ENCODE measurements at regions of chr10 and their contacts with region 1.

Region 1: DNA sequence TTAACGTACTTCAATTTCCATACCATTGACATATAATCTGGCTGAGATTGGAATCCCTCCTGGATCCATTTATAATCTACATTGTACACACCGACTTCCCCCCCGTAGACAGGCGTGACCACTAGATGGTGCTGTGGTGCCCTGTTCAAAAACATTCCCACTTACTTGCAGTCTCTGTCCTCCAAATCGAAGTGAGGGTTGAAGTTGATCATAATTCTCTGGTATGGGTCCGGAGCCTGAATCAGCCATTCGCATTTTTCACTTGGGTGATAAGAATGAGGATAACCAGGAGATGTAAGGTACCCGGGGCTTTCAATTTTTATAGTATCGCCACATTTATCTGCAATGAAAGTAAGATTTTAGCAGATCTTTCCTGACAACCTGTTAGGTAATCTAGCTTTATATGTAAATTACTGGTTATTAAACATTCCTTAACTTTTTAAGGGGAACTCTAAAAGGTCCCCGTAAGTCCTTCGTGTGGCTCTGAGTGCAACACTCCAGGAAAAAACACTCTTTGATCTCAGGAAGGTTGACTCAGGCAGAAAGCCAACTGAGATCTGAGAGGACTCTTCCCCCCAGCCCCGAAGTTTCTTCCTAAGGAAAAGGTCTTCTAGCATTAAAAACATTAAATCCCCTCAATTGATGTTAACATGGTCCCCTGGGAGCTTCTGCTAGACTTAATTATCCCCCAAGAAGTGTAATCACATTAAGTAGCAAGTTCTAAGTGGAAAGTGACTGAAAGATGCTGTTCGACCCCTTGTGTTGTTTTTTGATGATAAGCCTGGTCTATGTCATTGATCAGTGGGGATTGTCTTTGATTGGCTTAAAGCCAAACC is 3.7 kb downstream of the NRP1 start:
- DNase-seq: peak; percentile 82 to 90
- ATAC-seq: peak in 3 of 4 donors; percentile 36 to 53 (median 49)
- H3K4me3 ChIP-seq: peak overlapping the region; percentile 84
- H3K27ac ChIP-seq: peak overlapping the region; percentile 85
- H3K4me1 ChIP-seq: peaks cover 42% of the 10 kb centered on the region
- H3K27me3 ChIP-seq: no peaks in the 10 kb centered on the region
- CTCF ChIP-seq: peak; percentile 91

Region 2: GRCh38 chr10:33193057-33193700 is 137.6 kb before region 1 on chr10:
- intact Hi-C with region 1: loop called (anchors 5 to 10 kb)
- DNase-seq: peak; percentile 73 to 83
- ATAC-seq: peak; percentile 78 to 93 (median 84)
- H3K4me3 ChIP-seq: peak overlapping the region; percentile 8
- H3K27ac ChIP-seq: peak overlapping the region; percentile 50
- H3K4me1 ChIP-seq: peaks cover 6% of the 10 kb centered on the region
- H3K27me3 ChIP-seq: no peaks in the 10 kb centered on the region
- CTCF ChIP-seq: peak; percentile 78

Region 3: DNA sequence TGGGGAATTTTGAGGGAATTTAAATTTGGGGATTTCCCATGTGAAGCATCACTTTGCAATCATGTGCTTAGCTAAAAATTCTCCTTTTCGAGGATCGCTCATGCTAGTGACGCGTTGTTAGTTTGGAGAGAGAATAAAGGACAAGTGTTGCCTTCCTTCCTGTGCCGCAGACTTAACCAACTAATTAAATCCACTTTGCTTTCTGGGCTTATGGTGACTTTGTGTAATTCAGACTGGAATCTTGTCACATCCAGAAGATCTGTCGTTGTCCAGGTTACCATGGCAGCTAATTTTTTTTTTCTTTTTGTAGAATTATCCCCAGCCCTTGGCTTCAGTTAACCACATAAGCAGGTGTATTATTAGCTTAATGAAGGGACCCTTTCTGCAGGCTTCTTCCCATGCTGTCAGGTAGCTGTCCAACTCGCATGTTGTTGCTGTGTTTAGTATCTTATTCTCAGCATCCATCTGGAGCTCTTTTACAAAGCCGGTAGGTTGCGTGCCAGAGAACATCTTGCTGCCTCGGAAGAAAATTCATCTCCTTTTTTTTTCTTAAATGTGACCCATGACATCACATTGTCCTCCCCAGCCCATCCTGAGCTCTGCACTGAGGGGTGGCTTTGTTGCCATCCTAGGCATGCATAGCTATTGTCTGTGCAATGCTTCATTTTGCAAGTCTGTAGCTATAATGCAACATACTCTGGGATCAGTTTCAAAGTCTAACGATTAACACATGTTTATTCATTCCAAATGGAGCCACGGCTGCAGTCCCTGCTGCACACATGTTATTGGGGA is 50.9 kb after region 1 on chr10:
- intact Hi-C with region 1: no loop called
- DNase-seq: no peak
- ATAC-seq: no peak
- H3K4me3 ChIP-seq: no peak overlapping the region
- H3K27ac ChIP-seq: no peak overlapping the region
- H3K4me1 ChIP-seq: peaks cover 3% of the 10 kb centered on the region
- H3K27me3 ChIP-seq: no peaks in the 10 kb centered on the region
- CTCF ChIP-seq: no peak

Region 4: DNA sequence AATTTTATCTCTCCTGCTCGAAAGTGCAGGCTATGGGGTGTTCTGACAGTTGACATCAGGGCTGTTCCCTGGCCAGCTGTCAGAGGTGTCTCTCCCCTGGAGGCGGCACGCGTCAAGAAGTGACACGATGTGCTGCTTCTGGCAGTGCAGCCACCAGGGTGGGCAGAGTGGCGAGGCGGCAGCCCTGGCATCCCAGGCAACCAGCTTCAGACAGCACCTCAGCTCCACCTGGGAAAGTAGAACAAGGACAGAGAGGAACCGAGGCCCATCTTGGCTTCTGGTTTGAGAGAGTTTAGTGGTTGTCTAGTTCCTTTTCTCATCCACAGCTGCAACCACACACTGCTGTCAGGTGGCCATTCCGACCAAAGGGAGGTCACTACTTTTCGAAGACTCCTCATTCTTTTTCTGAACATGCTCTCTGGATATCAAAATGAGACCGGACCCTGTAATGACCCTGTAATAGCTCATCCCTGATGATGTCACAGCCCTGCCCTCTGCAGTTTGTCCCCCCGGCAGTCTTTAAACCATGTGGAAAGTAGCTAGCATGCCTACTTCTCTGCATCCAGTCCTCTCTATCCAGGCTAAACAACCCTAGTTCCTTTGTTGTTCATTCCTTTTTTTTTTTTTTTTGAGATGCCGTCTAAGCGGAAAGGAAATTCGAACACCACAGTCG is 384.7 kb after region 1 on chr10:
- intact Hi-C with region 1: loop called in 1 of 2 experiments (anchors 10 kb)
- DNase-seq: peak in 1 of 2 donors; percentile 52
- ATAC-seq: peak in 2 of 4 donors; percentile 61 to 64
- H3K4me3 ChIP-seq: no peak overlapping the region
- H3K27ac ChIP-seq: no peak overlapping the region
- H3K4me1 ChIP-seq: peaks cover 5% of the 10 kb centered on the region
- H3K27me3 ChIP-seq: no peaks in the 10 kb centered on the region
- CTCF ChIP-seq: no peak

Region 5: DNA sequence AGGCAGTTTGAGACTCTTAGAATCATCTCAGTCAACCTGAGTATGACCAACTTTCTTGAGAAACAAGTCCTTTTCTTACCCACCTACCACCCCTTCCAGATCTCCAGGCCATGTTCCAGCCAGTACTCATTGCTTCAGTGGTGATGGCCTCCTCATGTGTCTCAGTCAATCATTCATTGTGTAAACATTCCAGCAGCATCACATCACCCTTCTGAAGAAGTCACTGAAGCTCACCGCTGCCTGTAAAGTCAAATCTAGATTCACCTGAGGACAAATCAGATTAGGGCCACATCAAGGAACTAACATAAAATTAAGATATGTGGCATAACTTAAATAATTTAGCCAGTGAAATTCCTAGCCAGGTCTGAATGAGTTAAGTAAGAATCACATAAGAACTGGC is 471.0 kb after region 1 on chr10:
- intact Hi-C with region 1: loop called in 1 of 2 experiments (anchors 5 kb)
- DNase-seq: peak in 1 of 2 donors; percentile 57
- ATAC-seq: peak; percentile 91 to 94 (median 94)
- H3K4me3 ChIP-seq: no peak overlapping the region
- H3K27ac ChIP-seq: peak overlapping the region; percentile 95
- H3K4me1 ChIP-seq: peaks cover 49% of the 10 kb centered on the region
- H3K27me3 ChIP-seq: no peaks in the 10 kb centered on the region
- CTCF ChIP-seq: no peak

Region 6: GRCh38 chr10:34102237-34102673 is 771.5 kb after region 1 on chr10:
- intact Hi-C with region 1: loop called in 1 of 2 experiments (anchors 10 kb)
- DNase-seq: peak; percentile 74 to 79
- ATAC-seq: peak; percentile 87 to 96 (median 92)
- H3K4me3 ChIP-seq: peak overlapping the region; percentile 33
- H3K27ac ChIP-seq: peak overlapping the region; percentile 69
- H3K4me1 ChIP-seq: peaks cover 18% of the 10 kb centered on the region
- H3K27me3 ChIP-seq: no peaks in the 10 kb centered on the region
- CTCF ChIP-seq: no peak

Measured in psoas muscle (tissue), 8 donors.